CD4-positive, alpha-beta memory T cell (primary cell): ENCODE measurements at regions of chr18 and their contacts with region 1.

Region 1: GRCh38 chr18:22563098-22563707 is 145.5 kb upstream of the CTAGE1 start:
- DNase-seq: peak in 3 of 5 donors; percentile 15 to 27 (median 18)
- H3K4me3 ChIP-seq: no peak overlapping the region
- H3K4me3 Mint-ChIP-seq: no peak overlapping the region
- H3K27ac ChIP-seq: no peak overlapping the region
- H3K27ac Mint-ChIP-seq: no peak overlapping the region
- H3K4me1 ChIP-seq: peaks cover 9% of the 10 kb centered on the region
- H3K4me1 Mint-ChIP-seq: peaks cover 1 to 8% (median 3%) of the 10 kb centered on the region in 4 donors
- H3K27me3 ChIP-seq: peaks cover 18% of the 10 kb centered on the region
- H3K27me3 Mint-ChIP-seq: peaks cover 13 to 16% of the 10 kb centered on the region in 2 donors

Region 2: DNA sequence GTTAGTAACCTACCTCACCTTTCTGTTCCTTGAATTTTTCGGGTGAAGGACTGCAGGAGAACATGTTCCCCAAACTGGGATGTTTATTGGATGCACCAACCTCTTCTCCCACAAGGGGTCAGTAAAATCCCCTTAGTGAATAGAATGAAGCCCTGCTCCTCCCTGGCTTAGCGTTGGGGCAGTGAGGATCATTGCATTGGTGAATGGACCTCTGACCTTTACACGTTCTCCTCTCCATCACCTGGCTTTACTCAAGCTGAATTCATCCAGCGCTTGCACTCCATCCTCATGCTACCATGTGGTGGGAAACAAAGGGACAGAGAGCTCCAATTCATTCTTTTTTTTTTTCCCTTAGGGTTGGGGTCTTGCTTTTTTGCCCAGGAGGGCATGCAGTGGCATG is 665.4 kb before region 1 on chr18:
- CTCF ChIA-PET with region 1: no interaction called
- POLR2A ChIA-PET with region 1: no interaction called
- intact Hi-C with region 1: loop called (anchors 2 kb)
- DNase-seq: peak in 3 of 5 donors; percentile 5 to 10 (median 7)
- H3K4me3 ChIP-seq: no peak overlapping the region
- H3K4me3 Mint-ChIP-seq: no peak overlapping the region
- H3K27ac ChIP-seq: no peak overlapping the region
- H3K27ac Mint-ChIP-seq: no peak overlapping the region
- H3K4me1 ChIP-seq: no peaks in the 10 kb centered on the region
- H3K4me1 Mint-ChIP-seq: peaks cover 0 to 7% (median 1%) of the 10 kb centered on the region in 4 donors
- H3K27me3 ChIP-seq: no peaks in the 10 kb centered on the region
- H3K27me3 Mint-ChIP-seq: peaks cover 6 to 10% of the 10 kb centered on the region in 2 donors

Region 3: GRCh38 chr18:22044474-22045220 is 518.6 kb before region 1 on chr18:
- CTCF ChIA-PET with region 1: no interaction called
- POLR2A ChIA-PET with region 1: no interaction called
- intact Hi-C with region 1: no loop called
- DNase-seq: no peak
- H3K4me3 ChIP-seq: no peak overlapping the region
- H3K4me3 Mint-ChIP-seq: no peak overlapping the region
- H3K27ac ChIP-seq: no peak overlapping the region
- H3K27ac Mint-ChIP-seq: no peak overlapping the region
- H3K4me1 ChIP-seq: no peaks in the 10 kb centered on the region
- H3K4me1 Mint-ChIP-seq: no peaks in the 10 kb centered on the region
- H3K27me3 ChIP-seq: no peaks in the 10 kb centered on the region
- H3K27me3 Mint-ChIP-seq: peaks cover 0 to 2% of the 10 kb centered on the region in 2 donors

Region 4: DNA sequence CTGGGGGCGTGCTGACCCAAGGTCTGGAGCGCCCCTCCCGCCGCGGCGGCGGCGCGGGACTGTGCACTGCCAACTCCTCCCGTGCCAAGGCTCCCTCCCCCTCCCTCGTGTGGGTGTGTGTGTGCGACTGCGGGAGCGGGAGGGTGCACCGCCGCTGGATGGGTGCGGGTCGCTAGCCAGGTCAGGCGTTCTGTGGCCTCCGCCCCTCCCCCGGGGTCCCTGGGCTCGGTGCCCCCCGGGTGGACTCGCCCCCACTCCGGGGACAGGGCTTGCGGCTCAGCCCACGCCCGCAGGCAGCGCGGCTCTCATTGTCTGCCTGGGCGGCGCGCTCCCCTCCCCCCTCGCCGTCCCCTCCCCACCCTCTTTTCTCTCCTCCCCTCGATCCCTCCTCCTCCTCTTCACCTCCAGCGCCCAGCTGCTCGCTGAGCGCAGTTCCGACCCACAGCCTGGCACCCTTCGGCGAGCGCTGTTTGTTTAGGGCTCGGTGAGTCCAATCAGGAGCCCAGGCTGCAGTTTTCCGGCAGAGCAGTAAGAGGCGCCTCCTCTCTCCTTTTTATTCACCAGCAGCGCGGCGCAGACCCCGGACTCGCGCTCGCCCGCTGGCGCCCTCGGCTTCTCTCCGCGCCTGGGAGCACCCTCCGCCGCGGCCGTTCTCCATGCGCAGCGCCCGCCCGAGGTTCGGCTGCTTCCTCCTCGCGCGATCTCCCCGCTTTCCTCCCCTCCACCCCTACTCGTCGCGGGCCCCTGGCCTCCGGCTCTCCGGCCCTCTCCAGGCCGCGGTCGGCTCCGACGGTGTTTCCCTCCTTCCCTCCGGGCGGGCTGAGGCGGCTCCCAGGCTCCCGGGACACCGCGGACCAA is 394.0 kb before region 1 on chr18 and contains the start of gene GATA6:
- CTCF ChIA-PET with region 1: no interaction called
- POLR2A ChIA-PET with region 1: no interaction called
- intact Hi-C with region 1: loop called (anchors 5 kb)
- DNase-seq: peak in 3 of 5 donors; percentile 12 to 28 (median 27)
- H3K4me3 ChIP-seq: peak within 1 kb of the TSS in 1 of 2 donors; percentile 37
- H3K4me3 Mint-ChIP-seq: peak within 1 kb of the TSS; percentile 79 to 90 (median 85)
- H3K27ac ChIP-seq: no peak within 1 kb of the TSS
- H3K27ac Mint-ChIP-seq: peak within 1 kb of the TSS in 1 of 7 donors; percentile 72
- H3K4me1 ChIP-seq: peaks cover 14% of the 10 kb centered on the region
- H3K4me1 Mint-ChIP-seq: peaks cover 17 to 29% (median 22%) of the 10 kb centered on the region in 4 donors
- H3K27me3 ChIP-seq: peaks cover 37% of the 10 kb centered on the region
- H3K27me3 Mint-ChIP-seq: peaks cover 45 to 60% of the 10 kb centered on the region in 2 donors
- total RNA-seq, gene GATA6: not detected

Region 5: DNA sequence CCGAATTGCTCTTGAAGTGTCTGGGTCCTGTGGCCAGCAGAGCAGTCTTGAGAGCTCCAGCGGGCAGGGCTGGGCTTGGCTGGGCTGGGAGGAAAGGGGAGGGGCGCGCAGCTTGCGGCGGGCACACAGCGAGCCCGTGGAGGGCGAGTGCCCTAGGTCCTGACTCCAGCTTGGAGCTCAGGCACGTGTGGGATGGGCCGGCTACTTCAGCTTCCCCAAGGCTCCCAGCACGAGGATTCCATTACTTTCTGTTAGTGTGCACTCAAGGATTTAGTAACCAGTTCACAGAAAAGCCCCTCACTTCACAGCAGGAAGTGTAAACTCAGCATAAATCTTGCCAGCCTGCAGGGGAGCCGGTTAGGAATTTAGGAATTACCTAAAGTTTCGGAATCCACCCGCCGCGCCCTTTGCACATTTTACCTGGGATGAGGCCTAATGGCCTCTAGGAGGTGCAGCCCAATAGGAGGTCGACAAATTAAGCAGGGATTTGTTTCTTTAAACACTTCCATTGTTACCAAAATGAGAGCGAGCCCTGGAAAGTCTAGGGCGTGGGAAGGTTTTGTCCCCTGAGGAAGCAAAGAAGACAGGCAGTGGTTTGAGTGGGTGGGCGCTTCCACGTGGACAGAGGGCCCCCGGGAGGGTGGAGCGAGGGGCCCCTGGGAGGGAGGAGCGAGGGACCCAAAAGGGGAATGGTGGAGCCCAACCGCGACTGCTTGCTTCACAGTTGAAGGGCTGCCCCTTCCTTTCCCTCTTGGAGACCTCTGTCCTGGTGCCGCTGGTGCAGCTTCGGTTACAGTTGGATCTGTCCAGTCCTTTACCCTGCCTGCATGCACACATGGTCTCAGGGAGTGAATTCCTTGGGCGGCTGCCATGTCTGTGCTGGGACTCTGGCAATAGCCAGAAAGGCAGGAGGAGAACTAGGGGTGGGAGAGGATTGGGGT is 238.7 kb before region 1 on chr18:
- CTCF ChIA-PET with region 1: interaction called, 3 read pairs
- POLR2A ChIA-PET with region 1: no interaction called
- intact Hi-C with region 1: loop called (anchors 2 kb)
- DNase-seq: no peak
- H3K4me3 ChIP-seq: no peak overlapping the region
- H3K4me3 Mint-ChIP-seq: peak overlapping the region in 7 of 8 donors; percentile 33 to 71 (median 53)
- H3K27ac ChIP-seq: no peak overlapping the region
- H3K27ac Mint-ChIP-seq: peak overlapping the region in 2 of 7 donors; percentile 36 to 76
- H3K4me1 ChIP-seq: no peaks in the 10 kb centered on the region
- H3K4me1 Mint-ChIP-seq: peaks cover 0 to 7% (median 2%) of the 10 kb centered on the region in 4 donors
- H3K27me3 ChIP-seq: no peaks in the 10 kb centered on the region
- H3K27me3 Mint-ChIP-seq: no peaks in the 10 kb centered on the region

Region 6: DNA sequence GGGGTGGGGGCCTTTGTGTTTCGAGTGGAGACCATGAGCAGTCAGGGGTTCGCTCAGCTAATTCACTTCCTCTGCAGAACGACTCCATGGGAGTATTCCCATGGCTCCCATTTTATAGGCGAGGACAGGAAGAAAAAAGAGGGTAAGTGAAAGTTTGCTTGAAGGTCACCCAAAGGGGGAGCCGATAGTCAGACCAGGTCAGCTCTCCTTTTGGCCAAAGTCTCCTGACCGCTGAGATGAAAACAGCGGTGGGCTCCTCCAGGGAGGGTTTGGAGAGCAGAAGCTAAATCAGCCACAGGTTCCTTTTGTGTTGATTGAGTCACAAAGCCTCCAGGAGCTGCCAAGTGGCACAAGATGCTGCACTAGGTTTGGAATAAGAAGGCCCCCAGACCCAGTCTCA is 111.4 kb before region 1 on chr18:
- CTCF ChIA-PET with region 1: no interaction called
- POLR2A ChIA-PET with region 1: no interaction called
- intact Hi-C with region 1: no loop called
- DNase-seq: no peak
- H3K4me3 ChIP-seq: no peak overlapping the region
- H3K4me3 Mint-ChIP-seq: no peak overlapping the region
- H3K27ac ChIP-seq: no peak overlapping the region
- H3K27ac Mint-ChIP-seq: no peak overlapping the region
- H3K4me1 ChIP-seq: no peaks in the 10 kb centered on the region
- H3K4me1 Mint-ChIP-seq: peaks cover 0 to 7% (median under 1%) of the 10 kb centered on the region in 4 donors
- H3K27me3 ChIP-seq: no peaks in the 10 kb centered on the region
- H3K27me3 Mint-ChIP-seq: no peaks in the 10 kb centered on the region

Region 7: GRCh38 chr18:22639026-22639463 is 75.8 kb after region 1 on chr18:
- CTCF ChIA-PET with region 1: no interaction called
- POLR2A ChIA-PET with region 1: no interaction called
- intact Hi-C with region 1: no loop called
- DNase-seq: no peak
- H3K4me3 ChIP-seq: no peak overlapping the region
- H3K4me3 Mint-ChIP-seq: no peak overlapping the region
- H3K27ac ChIP-seq: no peak overlapping the region
- H3K27ac Mint-ChIP-seq: no peak overlapping the region
- H3K4me1 ChIP-seq: no peaks in the 10 kb centered on the region
- H3K4me1 Mint-ChIP-seq: no peaks in the 10 kb centered on the region
- H3K27me3 ChIP-seq: no peaks in the 10 kb centered on the region
- H3K27me3 Mint-ChIP-seq: peaks cover 0 to 1% of the 10 kb centered on the region in 2 donors